Dendritic cell treated with granulocyte-macrophage colony-stimulating factor and Interleukin-4, amounts not matched to agents 40 ng/mL and 50 ng/mL, for 4 days (primary cell): ENCODE measurements at regions of chr16 and their contacts with region 1.

Region 1: DNA sequence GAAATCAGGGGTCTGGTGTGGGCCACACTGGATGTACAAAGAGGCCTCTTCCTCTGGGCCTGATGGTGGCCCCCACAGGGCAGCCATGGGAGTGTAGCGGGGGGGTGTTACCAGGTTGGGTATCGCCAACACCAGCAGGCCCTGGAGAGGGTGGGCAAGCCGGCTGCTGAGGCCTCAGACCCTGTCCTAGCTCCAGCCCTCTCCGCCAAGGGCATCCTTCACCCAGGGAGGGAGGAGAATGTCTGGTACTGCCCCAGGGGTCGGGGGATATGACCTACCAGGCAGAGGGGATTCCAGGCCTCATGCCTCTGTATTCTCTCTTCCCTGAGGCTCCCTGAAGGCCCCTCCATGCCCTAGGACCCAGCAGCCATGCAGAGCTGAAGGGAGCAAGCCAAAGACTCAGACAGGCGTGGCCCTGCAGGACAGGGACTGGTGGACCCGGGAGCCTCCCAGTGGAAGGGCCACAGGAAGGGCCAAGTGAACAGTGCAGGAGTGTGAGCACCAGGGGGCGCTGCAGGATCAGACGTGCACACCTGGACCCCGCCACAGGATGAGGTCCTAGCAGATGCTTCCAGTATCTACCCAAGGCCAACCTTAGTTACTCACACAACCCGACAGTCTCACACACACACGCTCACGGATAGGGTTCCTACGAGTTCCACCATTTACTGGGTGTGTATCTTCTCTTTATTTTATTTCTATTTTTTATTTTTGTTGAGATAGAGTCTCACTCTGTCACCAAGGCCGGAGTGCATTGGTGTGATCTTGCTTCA is 10.9 kb upstream of the CES4A start:
- H3K4me3 Mint-ChIP-seq: no peak overlapping the region
- H3K27ac Mint-ChIP-seq: no peak overlapping the region
- H3K4me1 Mint-ChIP-seq: peaks cover 34% of the 10 kb centered on the region
- H3K27me3 Mint-ChIP-seq: peaks cover 32% of the 10 kb centered on the region

Region 2: DNA sequence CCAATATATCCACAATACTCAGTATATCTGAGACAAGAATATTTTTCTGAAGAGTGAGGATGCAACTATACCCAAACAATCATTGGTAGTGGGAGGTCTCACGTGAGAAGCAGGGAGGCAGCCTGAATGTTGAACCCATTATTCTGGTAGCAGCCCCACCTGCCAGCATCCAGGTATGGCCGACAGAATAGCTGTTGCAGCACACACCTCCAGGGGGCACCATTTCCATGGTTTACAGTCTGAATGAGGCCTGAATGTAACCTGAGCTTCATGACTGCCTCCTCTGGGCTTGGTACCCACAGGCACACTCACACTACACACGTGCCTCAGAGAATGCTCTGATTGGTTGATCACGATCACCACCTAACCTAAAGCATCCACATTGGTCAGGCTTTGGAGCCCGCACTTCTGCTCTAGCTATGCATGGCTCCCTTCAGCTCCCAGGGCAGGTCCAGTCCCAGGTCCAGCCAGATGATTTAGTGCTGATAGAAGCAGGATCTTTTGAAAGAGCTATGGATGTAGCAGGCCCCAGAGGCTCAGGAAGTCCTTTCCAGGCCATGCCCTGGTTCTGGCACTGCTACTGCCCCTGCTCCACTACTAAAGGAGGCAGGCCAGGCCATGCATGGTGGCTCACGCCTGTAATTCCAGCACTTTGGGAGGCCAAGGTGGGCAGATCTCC is 40.4 kb after region 1 on chr16:
- intact Hi-C with region 1: loop called (anchors 1 kb)
- H3K4me3 Mint-ChIP-seq: no peak overlapping the region
- H3K27ac Mint-ChIP-seq: no peak overlapping the region
- H3K4me1 Mint-ChIP-seq: peaks cover 29% of the 10 kb centered on the region
- H3K27me3 Mint-ChIP-seq: peaks cover 38% of the 10 kb centered on the region

Region 3: GRCh38 chr16:67183627-67184328 is 206.3 kb after region 1 on chr16 and contains the start of gene MATCAP1:
- intact Hi-C with region 1: loop called (anchors 1 kb)
- H3K4me3 Mint-ChIP-seq: no peak within 1 kb of the TSS
- H3K27ac Mint-ChIP-seq: no peak within 1 kb of the TSS
- H3K4me1 Mint-ChIP-seq: peaks cover 18% of the 10 kb centered on the region
- H3K27me3 Mint-ChIP-seq: peaks cover 32% of the 10 kb centered on the region